OCI-LY7 (cell line): ENCODE measurements at regions of chr17 and their contacts with region 1.

Region 1: GRCh38 chr17:19004421-19005136 is at the start of gene FAM83G:
- DNase-seq: peak; percentile 58
- H3K4me3 ChIP-seq: peak within 1 kb of the TSS; percentile 71
- H3K27ac ChIP-seq: no peak within 1 kb of the TSS
- H3K4me1 ChIP-seq: peaks cover 35% of the 10 kb centered on the region
- CTCF ChIP-seq: no peak
- total RNA-seq, gene FAM83G: 5.0 and 15.3 TPM in 2 replicates

Region 2: DNA sequence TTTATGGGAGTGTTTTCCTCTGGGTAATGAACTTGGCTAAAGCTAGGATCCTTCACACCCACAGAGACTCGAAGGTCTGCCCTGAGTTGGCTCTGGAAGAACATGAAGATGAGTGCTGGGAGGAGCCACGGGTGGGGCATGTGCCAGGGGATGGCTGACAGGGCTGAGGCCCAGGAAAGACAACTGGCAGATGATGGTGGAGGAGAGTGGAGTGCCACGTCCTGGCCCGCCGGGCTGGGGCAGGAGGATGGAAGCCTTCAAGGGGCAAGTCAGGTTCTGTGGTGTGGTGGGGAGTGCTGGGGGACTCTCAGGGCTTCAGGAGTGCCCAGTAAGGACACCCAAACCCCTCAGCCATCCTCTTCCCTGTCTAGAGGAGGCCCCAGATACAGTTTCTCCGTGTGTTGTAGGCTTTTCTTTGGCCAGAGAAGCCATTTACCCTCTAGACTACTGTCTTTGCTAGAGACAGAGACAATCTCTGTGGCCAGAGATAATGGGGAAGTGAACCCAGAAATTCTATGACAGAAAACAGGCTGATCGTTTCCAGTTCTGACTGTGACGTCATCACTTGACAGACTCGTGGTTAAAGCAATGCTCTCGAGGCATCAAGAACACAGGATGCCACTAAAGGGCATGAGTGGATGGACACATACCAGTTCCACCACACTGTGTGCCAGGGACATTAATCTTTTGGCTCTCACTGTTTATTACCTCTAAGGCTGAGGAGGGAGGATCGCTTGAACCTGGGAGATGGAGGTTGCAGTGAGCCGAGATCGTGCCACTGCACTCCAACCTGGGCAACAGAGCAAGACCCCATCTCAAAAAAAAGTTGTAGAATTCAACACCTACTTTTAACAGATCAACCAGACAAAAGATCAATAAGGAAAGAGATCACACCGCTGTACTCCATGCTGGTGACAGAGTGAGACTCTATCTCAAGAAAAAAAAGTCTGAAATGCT is 71.2 kb before region 1 on chr17:
- CTCF ChIA-PET with region 1: no interaction called
- POLR2A ChIA-PET with region 1: no interaction called
- intact Hi-C with region 1: loop called (anchors 10 kb)
- DNase-seq: no peak
- H3K4me3 ChIP-seq: no peak overlapping the region
- H3K27ac ChIP-seq: no peak overlapping the region
- H3K4me1 ChIP-seq: no peaks in the 10 kb centered on the region
- CTCF ChIP-seq: no peak